ENCODE measurements at regions of chr12 and their contacts with region 1.

Region 1: DNA sequence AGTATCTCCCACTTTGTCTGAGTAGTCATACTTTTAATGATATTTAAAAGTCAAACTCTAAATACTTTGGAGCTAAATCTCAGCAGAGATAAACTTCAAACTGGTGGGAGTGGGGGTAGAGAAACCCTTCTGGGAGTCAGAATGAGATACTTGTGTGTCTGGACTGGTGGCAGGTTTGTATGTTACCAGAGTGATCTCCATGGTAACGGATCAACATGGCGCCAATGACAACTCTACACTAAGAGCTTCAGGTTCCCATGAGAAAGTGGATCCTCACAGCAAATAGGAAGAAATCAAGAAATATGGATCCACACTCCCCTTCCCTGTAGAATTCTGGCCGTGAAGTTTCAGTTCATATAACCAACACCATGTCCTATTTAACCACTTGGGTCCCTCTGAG is 121.9 kb downstream of the ETV6 start:
- DNase-seq: peak; percentile 41
- H3K4me3 Mint-ChIP-seq: no peak overlapping the region
- H3K27ac Mint-ChIP-seq: peak overlapping the region; percentile 68
- H3K4me1 Mint-ChIP-seq: peaks cover 94% of the 10 kb centered on the region
- H3K27me3 Mint-ChIP-seq: no peaks in the 10 kb centered on the region

Region 2: GRCh38 chr12:10613349-10614055 is 1157.9 kb before region 1 on chr12 and contains the start of gene MAGOHB:
- CTCF ChIA-PET with region 1: no interaction called
- intact Hi-C with region 1: loop called (anchors 5 kb)
- DNase-seq: peak; percentile 99
- H3K4me3 Mint-ChIP-seq: peak within 1 kb of the TSS; percentile 99
- H3K27ac Mint-ChIP-seq: peak within 1 kb of the TSS; percentile 99
- H3K4me1 Mint-ChIP-seq: peaks cover 30% of the 10 kb centered on the region
- H3K27me3 Mint-ChIP-seq: peaks cover 2% of the 10 kb centered on the region
- total RNA-seq, gene MAGOHB: 58.8 to 61.1 TPM